CD8-positive, alpha-beta T cell (primary cell): ENCODE measurements at regions of chr6 and their contacts with region 1.

Region 1: GRCh38 chr6:149431905-149432775 is 32.1 kb downstream of the SUMO4 start:
- DNase-seq: peak; percentile 80 to 94 (median 87)
- ATAC-seq: peak; percentile 97
- H3K4me3 ChIP-seq: no peak overlapping the region
- H3K4me3 Mint-ChIP-seq: peak overlapping the region; percentile 74
- H3K27ac ChIP-seq: no peak overlapping the region
- H3K27ac Mint-ChIP-seq: no peak overlapping the region
- H3K4me1 ChIP-seq: no peaks in the 10 kb centered on the region
- H3K4me1 Mint-ChIP-seq: peaks cover 7% of the 10 kb centered on the region
- H3K27me3 ChIP-seq: no peaks in the 10 kb centered on the region
- H3K27me3 Mint-ChIP-seq: no peaks in the 10 kb centered on the region
- CTCF ChIP-seq: peak; percentile 99

Region 2: DNA sequence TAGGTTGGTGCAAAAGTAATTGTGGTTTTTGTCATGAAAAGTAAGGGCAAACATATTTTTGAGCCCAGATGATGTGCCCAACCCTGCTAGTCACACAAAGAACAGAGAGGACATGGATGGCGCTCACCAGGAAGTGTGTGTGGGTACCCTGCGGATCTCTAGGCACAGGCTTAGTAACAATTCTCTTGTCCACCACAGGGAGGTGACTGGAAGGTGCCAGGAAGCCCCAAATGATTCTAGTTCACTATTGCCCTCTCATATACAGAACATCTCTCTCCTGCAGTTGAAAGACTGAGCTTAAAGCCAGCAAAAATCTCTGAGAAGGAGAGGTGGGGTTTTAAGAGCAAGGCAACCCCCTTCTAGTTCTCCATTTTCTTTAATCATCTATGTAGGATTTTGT is 386.7 kb before region 1 on chr6:
- CTCF ChIA-PET with region 1: interaction called, 271 read pairs
- POLR2A ChIA-PET with region 1: no interaction called
- intact Hi-C with region 1: no loop called
- DNase-seq: peak in 3 of 9 experiments; percentile 24 to 50 (median 33)
- ATAC-seq: peak; percentile 84
- H3K4me3 ChIP-seq: no peak overlapping the region
- H3K4me3 Mint-ChIP-seq: no peak overlapping the region
- H3K27ac ChIP-seq: no peak overlapping the region
- H3K27ac Mint-ChIP-seq: no peak overlapping the region
- H3K4me1 ChIP-seq: peaks cover 30% of the 10 kb centered on the region
- H3K4me1 Mint-ChIP-seq: peaks cover 31% of the 10 kb centered on the region
- H3K27me3 ChIP-seq: no peaks in the 10 kb centered on the region
- H3K27me3 Mint-ChIP-seq: no peaks in the 10 kb centered on the region
- CTCF ChIP-seq: no peak

Region 3: DNA sequence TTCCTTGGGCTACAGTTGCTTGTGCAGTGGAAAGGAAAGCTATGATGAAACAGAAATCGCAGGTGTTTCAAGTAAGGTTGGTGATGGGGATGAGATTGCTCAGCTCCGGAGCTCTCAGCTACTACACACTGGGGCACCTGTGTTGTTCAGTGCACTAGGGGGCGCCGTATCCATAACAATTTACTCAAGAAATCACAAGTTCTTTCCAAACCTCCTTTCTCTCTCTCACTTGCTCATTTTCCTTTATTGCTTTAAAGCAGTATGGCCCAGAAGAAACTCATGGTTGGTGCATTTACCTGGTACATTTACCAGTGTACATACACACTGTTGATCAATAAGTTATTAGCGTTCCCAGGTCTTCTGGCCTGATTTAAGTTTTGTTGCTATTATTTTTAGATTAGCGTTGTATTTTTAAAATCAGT is 349.8 kb before region 1 on chr6:
- CTCF ChIA-PET with region 1: interaction called, 108 read pairs
- POLR2A ChIA-PET with region 1: no interaction called
- intact Hi-C with region 1: loop called (anchors 1 kb)
- DNase-seq: peak; percentile 70 to 90 (median 84)
- ATAC-seq: peak; percentile 91
- H3K4me3 ChIP-seq: no peak overlapping the region
- H3K4me3 Mint-ChIP-seq: no peak overlapping the region
- H3K27ac ChIP-seq: no peak overlapping the region
- H3K27ac Mint-ChIP-seq: peak overlapping the region; percentile 49
- H3K4me1 ChIP-seq: peaks cover 21% of the 10 kb centered on the region
- H3K4me1 Mint-ChIP-seq: peaks cover 30% of the 10 kb centered on the region
- H3K27me3 ChIP-seq: no peaks in the 10 kb centered on the region
- H3K27me3 Mint-ChIP-seq: no peaks in the 10 kb centered on the region
- CTCF ChIP-seq: peak; percentile 87

Region 4: GRCh38 chr6:149182262-149182661 is 249.9 kb before region 1 on chr6:
- CTCF ChIA-PET with region 1: interaction called, 6 read pairs
- POLR2A ChIA-PET with region 1: no interaction called
- intact Hi-C with region 1: loop called in 1 of 2 experiments (anchors 5 kb)
- DNase-seq: no peak
- ATAC-seq: no peak
- H3K4me3 ChIP-seq: no peak overlapping the region
- H3K4me3 Mint-ChIP-seq: no peak overlapping the region
- H3K27ac ChIP-seq: no peak overlapping the region
- H3K27ac Mint-ChIP-seq: no peak overlapping the region
- H3K4me1 ChIP-seq: no peaks in the 10 kb centered on the region
- H3K4me1 Mint-ChIP-seq: no peaks in the 10 kb centered on the region
- H3K27me3 ChIP-seq: no peaks in the 10 kb centered on the region
- H3K27me3 Mint-ChIP-seq: no peaks in the 10 kb centered on the region
- CTCF ChIP-seq: no peak

Region 5: GRCh38 chr6:149324428-149324827 is 107.7 kb before region 1 on chr6:
- CTCF ChIA-PET with region 1: interaction called, 13 read pairs
- POLR2A ChIA-PET with region 1: no interaction called
- intact Hi-C with region 1: no loop called
- DNase-seq: no peak
- ATAC-seq: no peak
- H3K4me3 ChIP-seq: no peak overlapping the region
- H3K4me3 Mint-ChIP-seq: peak overlapping the region; percentile 33
- H3K27ac ChIP-seq: no peak overlapping the region
- H3K27ac Mint-ChIP-seq: no peak overlapping the region
- H3K4me1 ChIP-seq: peaks cover 78% of the 10 kb centered on the region
- H3K4me1 Mint-ChIP-seq: peaks cover 79% of the 10 kb centered on the region
- H3K27me3 ChIP-seq: no peaks in the 10 kb centered on the region
- H3K27me3 Mint-ChIP-seq: no peaks in the 10 kb centered on the region
- CTCF ChIP-seq: no peak

Region 6: DNA sequence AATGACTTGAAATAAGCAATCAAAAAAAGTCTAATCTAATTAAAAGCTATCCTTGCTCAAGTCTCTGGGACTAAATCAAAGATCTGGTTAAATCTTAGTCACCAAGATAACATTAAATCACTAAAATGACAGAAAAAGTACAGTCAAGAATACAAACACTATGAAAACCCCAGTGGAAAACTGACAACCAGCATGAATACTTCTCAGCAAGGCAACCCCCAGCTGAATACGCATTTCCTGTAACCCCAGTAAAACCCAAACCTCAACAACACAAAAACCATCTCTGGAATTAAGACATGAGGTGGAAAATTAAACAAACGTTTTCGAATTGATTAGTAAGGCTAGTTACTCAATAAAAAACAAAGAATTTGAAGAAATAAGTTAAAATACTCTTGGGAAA is 76.3 kb after region 1 on chr6:
- CTCF ChIA-PET with region 1: interaction called, 13 read pairs
- POLR2A ChIA-PET with region 1: no interaction called
- intact Hi-C with region 1: no loop called
- DNase-seq: peak in 4 of 9 experiments; percentile 39 to 86 (median 65)
- ATAC-seq: peak; percentile 91
- H3K4me3 ChIP-seq: no peak overlapping the region
- H3K4me3 Mint-ChIP-seq: no peak overlapping the region
- H3K27ac ChIP-seq: peak overlapping the region; percentile 28 to 51
- H3K27ac Mint-ChIP-seq: peak overlapping the region; percentile 19
- H3K4me1 ChIP-seq: peaks cover 22% of the 10 kb centered on the region
- H3K4me1 Mint-ChIP-seq: peaks cover 28% of the 10 kb centered on the region
- H3K27me3 ChIP-seq: no peaks in the 10 kb centered on the region
- H3K27me3 Mint-ChIP-seq: no peaks in the 10 kb centered on the region
- CTCF ChIP-seq: no peak

Region 7: DNA sequence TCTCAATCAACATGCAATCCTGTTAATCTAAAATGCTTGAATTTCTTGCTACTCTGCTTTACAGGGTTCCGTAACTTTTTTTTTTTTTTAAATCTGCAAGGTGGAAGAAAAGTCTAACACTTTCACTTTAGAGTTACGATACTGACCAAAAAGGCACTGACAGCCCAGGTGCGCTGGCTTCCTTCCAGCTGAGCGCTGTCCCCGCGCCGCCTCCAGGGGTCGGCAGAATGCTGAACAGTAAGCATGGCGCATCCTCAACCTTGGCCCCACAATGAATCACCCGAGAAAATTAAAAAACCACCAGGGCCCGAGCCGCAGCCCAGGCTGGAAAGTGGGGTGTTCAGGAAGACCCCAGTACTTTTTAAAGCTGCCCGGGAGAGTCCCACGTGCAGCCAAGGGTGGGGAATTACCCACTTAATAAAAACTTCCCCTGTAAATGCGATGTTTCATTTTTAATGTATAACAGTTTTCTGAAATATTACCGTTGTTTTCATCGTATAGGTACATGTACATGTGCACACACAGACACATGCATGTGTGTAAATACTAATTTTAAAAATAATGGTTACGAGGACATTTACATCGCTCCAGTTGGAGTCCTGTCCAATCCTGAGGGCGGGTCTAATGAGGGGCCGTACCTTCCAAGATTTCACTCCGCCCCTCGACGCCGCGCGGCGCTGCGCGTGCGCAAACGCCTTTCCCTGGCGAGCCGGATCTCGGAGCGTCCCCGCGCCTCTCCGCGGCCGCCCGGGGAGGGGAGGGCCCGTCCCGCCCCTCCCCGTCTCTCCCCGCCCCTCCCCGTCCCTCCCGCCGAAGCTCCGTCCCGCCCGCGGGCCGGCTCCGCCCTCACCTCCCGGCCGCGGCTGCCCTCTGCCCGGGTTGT is 133.6 kb after region 1 on chr6 and contains the start of gene GINM1:
- CTCF ChIA-PET with region 1: no interaction called
- POLR2A ChIA-PET with region 1: no interaction called
- intact Hi-C with region 1: no loop called
- DNase-seq: peak; percentile 91 to 97 (median 94)
- ATAC-seq: peak; percentile 83
- H3K4me3 ChIP-seq: peak within 1 kb of the TSS; percentile 84 to 98
- H3K4me3 Mint-ChIP-seq: peak within 1 kb of the TSS; percentile 88
- H3K27ac ChIP-seq: peak within 1 kb of the TSS; percentile 75 to 88
- H3K27ac Mint-ChIP-seq: peak within 1 kb of the TSS; percentile 95
- H3K4me1 ChIP-seq: peaks cover 7% of the 10 kb centered on the region
- H3K4me1 Mint-ChIP-seq: peaks cover 18% of the 10 kb centered on the region
- H3K27me3 ChIP-seq: no peaks in the 10 kb centered on the region
- H3K27me3 Mint-ChIP-seq: no peaks in the 10 kb centered on the region
- CTCF ChIP-seq: peak; percentile 78
- total RNA-seq, gene GINM1: 32.7 to 35.2 TPM